Dorsolateral prefrontal cortex (tissue), 120 donors: ENCODE measurements at regions of chr12 and their contacts with region 1.

Region 1: DNA sequence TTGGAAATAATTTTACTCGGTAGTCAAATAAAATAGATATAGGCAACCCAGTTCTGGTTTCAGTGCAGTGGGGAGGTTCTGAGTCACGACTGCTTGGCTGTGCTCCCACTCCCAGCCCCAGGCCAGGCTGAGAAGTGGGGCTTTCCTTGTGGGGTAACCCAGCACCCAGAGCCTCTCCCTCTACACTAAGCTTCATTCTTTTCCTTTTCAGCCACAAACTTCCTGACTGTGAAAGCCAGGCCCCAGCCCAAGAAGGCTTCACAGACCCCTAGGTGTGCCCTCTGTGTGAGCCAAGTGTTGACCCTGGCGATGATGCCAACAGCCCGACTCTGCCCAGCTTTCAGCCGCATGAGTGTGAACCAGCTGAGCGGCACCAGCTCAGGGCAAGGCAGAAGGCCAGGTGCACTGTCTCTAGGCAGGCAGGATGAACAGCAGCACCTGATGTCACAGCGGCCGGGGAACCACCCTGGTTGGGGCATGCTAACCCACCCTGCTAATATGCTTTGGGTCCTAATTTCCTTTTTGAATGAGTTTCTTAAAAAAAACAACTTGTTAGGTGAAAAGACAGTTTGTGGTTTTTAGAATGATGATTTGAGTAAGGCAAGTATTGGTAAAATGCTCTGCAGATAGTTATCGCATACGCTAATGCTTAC is 42.2 kb upstream of the ATP23 start:
- DNase-seq: peak in 1 of 10 donors; percentile 40
- H3K4me3 ChIP-seq: no peak overlapping the region
- H3K27ac ChIP-seq: peak overlapping the region in 41 of 59 donors; percentile 3 to 100 (median 98)
- H3K27me3 ChIP-seq: no peaks in the 10 kb centered on the region
- CTCF ChIP-seq: no peak

Region 2: GRCh38 chr12:57830393-57830792 is 68.7 kb before region 1 on chr12:
- intact Hi-C with region 1: loop called (anchors 2 kb)
- DNase-seq: no peak
- H3K4me3 ChIP-seq: peak overlapping the region in 3 of 59 donors; percentile 4 to 9 (median 6)
- H3K27ac ChIP-seq: peak overlapping the region in 36 of 59 donors; percentile 0 to 90 (median 62)
- H3K27me3 ChIP-seq: no peaks in the 10 kb centered on the region
- CTCF ChIP-seq: no peak